Caco-2 (cell line): ENCODE measurements at regions of chr3 and their contacts with region 1.

Region 1: DNA sequence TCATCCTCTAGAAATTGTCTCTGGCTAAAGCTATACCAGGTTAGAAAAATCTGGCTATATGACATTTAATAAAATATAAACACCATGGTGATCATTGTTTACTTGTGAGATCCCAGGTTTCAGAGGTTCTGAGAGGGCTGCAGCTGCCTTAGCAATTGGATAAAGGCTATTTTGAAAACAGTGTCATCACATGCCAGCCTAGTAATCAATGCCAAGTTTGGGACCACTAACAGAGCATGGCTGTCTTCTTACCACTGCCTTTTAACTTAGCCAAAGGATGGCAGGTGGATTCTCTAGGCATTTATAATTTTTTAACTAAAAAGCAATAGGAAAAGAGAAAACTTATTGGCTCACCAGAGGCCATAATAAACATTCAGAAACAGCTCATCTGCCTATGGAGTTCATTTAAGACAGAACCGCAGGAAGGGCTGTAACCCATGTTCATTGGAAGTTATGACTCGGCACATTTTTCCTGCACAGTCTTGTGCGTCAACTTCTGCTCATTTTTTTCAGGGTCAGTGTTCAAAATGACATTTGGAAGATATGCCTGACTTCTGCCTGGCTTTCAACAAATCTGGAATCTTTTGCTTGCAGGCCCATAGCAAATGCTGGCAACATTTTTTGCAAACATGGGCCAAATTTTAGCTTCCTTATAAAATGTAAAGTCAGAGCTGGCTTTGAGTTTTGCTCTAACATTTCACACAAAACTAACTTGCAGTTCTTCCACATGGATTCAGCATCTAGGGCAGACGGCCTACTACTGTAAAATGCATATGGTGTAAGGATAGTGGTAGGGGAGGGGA is 476.0 kb upstream of the TBL1XR1 start:
- DNase-seq: peak in 1 of 2 experiments; percentile 8
- H3K4me3 ChIP-seq: no peak overlapping the region
- H3K4me3 Mint-ChIP-seq: peak overlapping the region; percentile 46
- H3K27ac Mint-ChIP-seq: peak overlapping the region; percentile 57
- H3K4me1 ChIP-seq: peaks cover 51% of the 10 kb centered on the region
- H3K4me1 Mint-ChIP-seq: peaks cover 30% of the 10 kb centered on the region
- H3K27me3 ChIP-seq: no peaks in the 10 kb centered on the region
- H3K27me3 Mint-ChIP-seq: no peaks in the 10 kb centered on the region
- CTCF ChIP-seq: no peak

Region 2: DNA sequence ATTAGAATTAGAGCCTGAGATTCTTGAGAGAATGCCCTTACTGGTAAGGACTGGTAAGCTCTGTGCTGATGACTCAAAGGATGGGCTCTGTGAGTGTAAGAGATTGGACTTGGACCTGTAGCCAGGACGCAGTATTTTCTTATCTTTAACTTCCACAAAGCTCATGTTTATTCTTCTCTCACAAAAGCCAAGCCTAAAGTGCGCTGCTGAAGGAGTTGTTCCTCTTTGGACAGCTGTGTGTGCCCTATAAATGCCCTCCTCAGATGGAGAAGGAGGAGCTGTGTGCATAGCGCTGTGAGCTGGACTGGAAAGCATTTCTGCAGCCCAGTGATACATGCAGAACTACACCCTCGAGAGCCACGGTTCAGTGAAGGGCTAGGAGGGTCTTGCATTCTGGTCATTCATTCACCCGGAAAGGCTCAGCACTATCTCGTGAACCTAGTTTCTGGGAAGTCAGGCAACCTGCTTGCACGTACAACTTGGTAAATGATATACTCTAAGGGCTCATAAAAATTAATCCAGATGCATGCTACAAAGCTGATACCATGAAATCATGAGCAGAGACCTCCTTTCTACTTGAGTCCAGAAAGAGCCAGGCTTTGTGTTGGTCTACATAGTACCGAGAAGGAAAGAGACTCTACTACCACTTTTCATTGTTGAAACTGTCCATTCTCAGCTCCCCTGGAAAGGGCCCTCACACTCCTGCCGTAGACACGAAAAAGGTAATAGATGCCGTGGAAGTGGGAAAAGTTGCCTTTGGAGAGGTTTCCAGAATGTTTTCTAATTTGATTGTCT is 373.1 kb before region 1 on chr3:
- CTCF ChIA-PET with region 1: no interaction called
- POLR2A ChIA-PET with region 1: no interaction called
- intact Hi-C with region 1: loop called (anchors 1 kb)
- DNase-seq: peak; percentile 79 to 95
- H3K4me3 ChIP-seq: peak overlapping the region; percentile 34
- H3K4me3 Mint-ChIP-seq: peak overlapping the region; percentile 68
- H3K27ac Mint-ChIP-seq: peak overlapping the region; percentile 82
- H3K4me1 ChIP-seq: peaks cover 30% of the 10 kb centered on the region
- H3K4me1 Mint-ChIP-seq: peaks cover 6% of the 10 kb centered on the region
- H3K27me3 ChIP-seq: no peaks in the 10 kb centered on the region
- H3K27me3 Mint-ChIP-seq: no peaks in the 10 kb centered on the region
- CTCF ChIP-seq: no peak

Region 3: DNA sequence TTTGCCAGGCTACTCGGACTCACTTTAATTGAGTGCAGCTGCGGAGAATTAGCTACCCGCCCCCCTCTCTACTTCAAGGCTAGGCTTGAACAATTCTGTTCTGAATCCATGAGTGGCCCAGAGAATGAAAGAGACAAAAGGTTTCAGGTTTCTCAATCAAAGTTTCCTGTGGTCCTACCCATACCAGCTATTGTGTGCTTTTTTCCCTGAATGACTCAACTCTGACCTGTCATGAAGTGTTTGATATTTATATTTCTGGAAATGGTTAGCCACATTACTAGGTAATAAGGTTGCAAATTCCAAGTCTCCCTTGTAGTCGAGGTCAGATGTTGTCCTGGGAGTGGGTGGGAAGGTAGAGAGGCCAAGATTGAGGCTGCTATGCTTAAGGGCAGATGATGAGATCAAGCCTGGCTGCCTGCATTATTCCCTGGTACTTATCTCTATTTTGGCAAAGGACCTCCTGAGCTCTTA is 83.4 kb before region 1 on chr3:
- CTCF ChIA-PET with region 1: no interaction called
- POLR2A ChIA-PET with region 1: no interaction called
- intact Hi-C with region 1: loop called (anchors 5 kb)
- DNase-seq: peak in 1 of 2 experiments; percentile 50
- H3K4me3 ChIP-seq: no peak overlapping the region
- H3K4me3 Mint-ChIP-seq: no peak overlapping the region
- H3K27ac Mint-ChIP-seq: no peak overlapping the region
- H3K4me1 ChIP-seq: peaks cover 35% of the 10 kb centered on the region; the same call in 1 of the 2 replicates
- H3K4me1 Mint-ChIP-seq: peaks cover 15% of the 10 kb centered on the region
- H3K27me3 ChIP-seq: no peaks in the 10 kb centered on the region
- H3K27me3 Mint-ChIP-seq: no peaks in the 10 kb centered on the region
- CTCF ChIP-seq: no peak

Region 4: DNA sequence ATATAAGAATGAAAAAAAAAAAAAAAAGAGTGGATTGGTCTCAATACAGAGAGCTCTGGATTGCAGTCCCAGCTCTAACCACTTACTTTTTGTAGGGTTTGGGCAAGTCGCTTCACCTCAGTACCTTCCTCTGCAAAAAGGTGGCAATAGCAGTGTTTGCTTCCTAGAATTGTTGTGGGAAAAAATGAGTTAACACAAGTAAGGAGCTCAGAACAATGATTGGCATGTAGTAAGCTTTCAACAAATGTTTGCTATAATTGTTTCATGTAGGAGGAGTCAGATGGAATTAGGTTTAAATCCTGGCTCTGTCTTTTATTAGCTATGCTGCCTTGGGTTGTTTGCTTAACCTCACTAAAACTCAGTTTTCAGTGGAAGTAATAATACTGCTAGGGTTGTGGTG is 50.8 kb before region 1 on chr3:
- CTCF ChIA-PET with region 1: no interaction called
- POLR2A ChIA-PET with region 1: no interaction called
- intact Hi-C with region 1: loop called (anchors 1 kb)
- DNase-seq: peak in 1 of 2 experiments; percentile 36
- H3K4me3 ChIP-seq: no peak overlapping the region
- H3K4me3 Mint-ChIP-seq: no peak overlapping the region
- H3K27ac Mint-ChIP-seq: peak overlapping the region; percentile 25
- H3K4me1 ChIP-seq: peaks cover 21% of the 10 kb centered on the region
- H3K4me1 Mint-ChIP-seq: peaks cover 31% of the 10 kb centered on the region
- H3K27me3 ChIP-seq: no peaks in the 10 kb centered on the region
- H3K27me3 Mint-ChIP-seq: no peaks in the 10 kb centered on the region
- CTCF ChIP-seq: peak in 1 of 2 experiments; percentile 43

Region 5: DNA sequence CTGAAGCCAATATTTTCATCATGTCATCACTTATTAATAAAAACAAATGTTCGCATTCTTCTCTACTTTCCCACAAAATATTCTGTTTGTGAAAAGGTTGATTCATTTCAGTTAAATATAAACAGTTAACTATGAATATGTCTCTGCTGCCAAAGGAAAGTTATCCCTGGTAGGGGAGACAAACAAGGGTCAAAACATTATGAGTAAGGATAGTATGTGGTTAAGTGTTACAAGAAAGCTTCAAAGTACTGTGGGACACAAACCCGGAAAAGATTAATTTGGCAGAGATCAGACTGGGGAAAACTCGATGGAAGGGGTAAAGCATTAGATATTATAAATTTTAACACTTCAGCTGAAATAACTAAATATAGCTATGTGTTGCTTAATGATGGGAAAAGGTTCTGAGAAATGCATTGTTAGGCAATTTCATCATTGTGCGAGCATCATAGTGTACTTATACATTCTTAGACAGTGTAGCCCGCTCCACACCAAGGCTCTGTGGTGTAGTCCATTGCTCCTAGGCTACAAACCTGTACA is 39.6 kb before region 1 on chr3:
- CTCF ChIA-PET with region 1: no interaction called
- POLR2A ChIA-PET with region 1: no interaction called
- intact Hi-C with region 1: no loop called
- DNase-seq: no peak
- H3K4me3 ChIP-seq: no peak overlapping the region
- H3K4me3 Mint-ChIP-seq: no peak overlapping the region
- H3K27ac Mint-ChIP-seq: no peak overlapping the region
- H3K4me1 ChIP-seq: no peaks in the 10 kb centered on the region
- H3K4me1 Mint-ChIP-seq: no peaks in the 10 kb centered on the region
- H3K27me3 ChIP-seq: no peaks in the 10 kb centered on the region
- H3K27me3 Mint-ChIP-seq: no peaks in the 10 kb centered on the region
- CTCF ChIP-seq: no peak

Region 6: GRCh38 chr3:177824190-177824786 is 151.0 kb after region 1 on chr3:
- CTCF ChIA-PET with region 1: no interaction called
- POLR2A ChIA-PET with region 1: no interaction called
- intact Hi-C with region 1: loop called (anchors 1 kb)
- DNase-seq: peak; percentile 66 to 80
- H3K4me3 ChIP-seq: no peak overlapping the region
- H3K4me3 Mint-ChIP-seq: no peak overlapping the region
- H3K27ac Mint-ChIP-seq: peak overlapping the region; percentile 77
- H3K4me1 ChIP-seq: peaks cover 38% of the 10 kb centered on the region
- H3K4me1 Mint-ChIP-seq: peaks cover 24% of the 10 kb centered on the region
- H3K27me3 ChIP-seq: no peaks in the 10 kb centered on the region
- H3K27me3 Mint-ChIP-seq: no peaks in the 10 kb centered on the region
- CTCF ChIP-seq: no peak